Calu3 (cell line): ENCODE measurements at regions of chr6 and their contacts with region 1.

Region 1: DNA sequence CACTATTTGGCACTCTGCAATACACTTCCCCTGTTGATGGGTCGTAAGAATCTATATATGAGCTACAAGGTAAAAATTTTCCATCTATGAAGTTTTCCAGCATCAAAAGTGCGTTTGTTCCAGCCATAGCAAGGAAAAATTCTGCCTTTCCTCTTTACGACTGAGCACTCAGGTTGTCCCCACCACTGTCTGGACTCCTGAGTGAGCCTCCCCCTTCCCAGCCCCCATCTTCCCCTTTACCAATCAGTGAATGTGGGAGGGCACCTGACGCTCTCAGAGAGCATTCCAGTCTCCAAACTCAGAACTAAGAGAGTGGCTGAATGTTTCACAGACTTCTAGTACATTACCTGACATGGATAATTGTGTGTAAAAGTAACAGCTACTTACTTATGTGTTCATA is at the start of gene ALDH8A1:
- DNase-seq: no peak
- H3K4me3 Mint-ChIP-seq: no peak within 1 kb of the TSS
- H3K27ac Mint-ChIP-seq: no peak within 1 kb of the TSS
- H3K4me1 Mint-ChIP-seq: peaks cover 4% of the 10 kb centered on the region
- H3K27me3 Mint-ChIP-seq: no peaks in the 10 kb centered on the region
- CTCF ChIP-seq: no peak
- total RNA-seq, gene ALDH8A1: 0.68 and 1.5 TPM in 2 replicates

Region 2: DNA sequence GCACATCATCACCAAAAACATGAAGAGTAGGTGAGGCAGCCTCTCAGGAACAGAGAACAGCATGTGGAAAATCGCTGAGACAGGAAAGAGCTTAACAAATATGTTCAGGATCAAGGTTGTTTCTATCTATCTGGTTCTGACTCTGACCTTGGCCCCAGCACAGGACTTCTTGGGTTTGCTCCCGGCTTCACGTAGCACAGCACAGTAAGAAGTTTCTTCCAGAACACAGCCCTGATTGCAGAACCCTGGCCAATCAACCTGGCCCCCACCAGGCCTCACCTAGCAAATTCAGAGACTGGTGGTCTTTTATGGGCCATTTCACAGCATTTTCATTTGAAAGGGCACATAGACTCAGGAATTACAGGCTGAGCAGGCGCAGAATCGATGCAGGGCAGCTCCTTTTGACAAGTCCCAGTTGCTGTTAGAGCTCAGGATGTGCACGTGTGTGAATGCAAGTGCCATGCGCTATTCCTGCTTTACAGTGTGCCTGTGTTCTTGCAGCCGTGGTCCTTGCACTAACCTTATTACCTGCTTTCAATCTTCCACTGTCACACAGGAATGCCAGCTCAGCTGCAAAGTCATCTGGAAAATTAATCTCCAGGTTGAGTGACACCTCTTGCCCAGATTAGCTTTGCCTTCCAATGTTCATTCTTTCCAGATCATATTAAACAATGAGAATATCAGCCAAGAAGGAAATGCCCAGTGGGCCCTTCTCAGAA is 797.0 kb before region 1 on chr6:
- CTCF ChIA-PET with region 1: no interaction called
- intact Hi-C with region 1: loop called (anchors 10 kb)
- DNase-seq: no peak
- H3K4me3 Mint-ChIP-seq: no peak overlapping the region
- H3K27ac Mint-ChIP-seq: no peak overlapping the region
- H3K4me1 Mint-ChIP-seq: no peaks in the 10 kb centered on the region
- H3K27me3 Mint-ChIP-seq: no peaks in the 10 kb centered on the region
- CTCF ChIP-seq: no peak

Region 3: GRCh38 chr6:134853111-134854055 is 96.5 kb before region 1 on chr6:
- CTCF ChIA-PET with region 1: no interaction called
- intact Hi-C with region 1: no loop called
- DNase-seq: no peak
- H3K4me3 Mint-ChIP-seq: no peak overlapping the region
- H3K27ac Mint-ChIP-seq: no peak overlapping the region
- H3K4me1 Mint-ChIP-seq: peaks cover 8% of the 10 kb centered on the region
- H3K27me3 Mint-ChIP-seq: no peaks in the 10 kb centered on the region
- CTCF ChIP-seq: no peak